G401 (cell line): ENCODE measurements at regions of chr12 and their contacts with region 1.

Region 1: GRCh38 chr12:117890137-117890536 is 78.7 kb downstream of the KSR2 start:
- DNase-seq: no peak

Region 2: DNA sequence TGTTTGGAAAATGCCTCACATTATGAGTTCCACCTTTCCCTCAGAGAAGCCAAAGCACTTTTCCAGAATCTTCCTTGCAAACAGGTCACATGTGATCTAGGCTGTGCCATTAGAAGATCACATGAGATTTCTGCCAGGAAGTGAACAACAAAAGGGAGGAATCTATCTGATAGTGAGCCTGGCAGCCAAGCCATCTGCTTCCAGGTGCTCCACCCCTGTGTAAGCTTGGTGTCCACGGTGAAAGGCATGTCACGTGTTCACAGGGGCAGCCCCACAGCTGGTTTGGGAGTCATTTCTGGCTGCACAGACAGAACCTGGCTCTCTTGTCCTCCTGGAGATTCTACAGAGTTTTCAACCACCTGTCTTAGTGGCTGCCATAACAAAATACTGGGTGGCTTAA is 82.2 kb after region 1 on chr12:
- in situ Hi-C with region 1: loop called (anchors 10 kb)
- DNase-seq: no peak

Region 3: DNA sequence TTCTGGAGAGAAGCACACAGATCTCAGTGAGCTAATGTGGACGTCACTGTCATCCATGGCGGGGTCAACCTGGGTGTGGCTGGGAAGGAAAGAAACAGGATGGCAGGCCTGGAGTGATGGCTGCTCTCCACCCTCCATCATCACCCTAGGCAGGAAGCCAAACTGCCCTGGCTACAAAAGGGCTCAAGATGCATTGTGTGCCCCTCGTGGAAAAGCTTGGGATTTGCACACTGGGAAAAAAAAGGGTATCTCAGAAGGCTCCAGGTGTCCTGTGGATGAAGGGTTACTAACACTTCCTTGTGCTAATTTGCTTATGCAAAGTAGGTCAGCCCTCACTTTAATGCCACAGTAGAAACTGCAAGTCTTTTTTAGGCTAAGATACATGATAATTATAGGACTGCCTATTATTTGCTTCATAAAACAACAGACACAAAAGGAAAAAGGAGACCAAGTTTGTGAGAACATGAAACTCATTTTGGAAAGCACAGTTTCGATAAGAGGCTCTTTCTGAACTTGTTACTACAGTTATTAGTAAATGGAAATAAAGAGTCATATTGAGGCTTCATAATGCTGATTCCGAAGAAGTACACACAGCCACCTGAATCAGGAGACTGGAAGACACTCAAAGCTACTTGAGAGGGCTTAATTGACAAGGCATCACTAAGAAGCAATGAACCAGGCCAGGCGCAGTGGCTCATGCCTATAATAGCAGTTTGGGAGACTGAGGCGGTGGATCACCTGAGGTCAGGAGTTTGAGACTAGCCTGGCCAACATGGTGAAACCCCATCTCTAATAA is 145.3 kb after region 1 on chr12:
- in situ Hi-C with region 1: loop called (anchors 10 kb)
- DNase-seq: peak; percentile 75